Left ventricle myocardium inferior (tissue), 1 donor: ENCODE measurements at regions of chr4 and their contacts with region 1.

Region 1: DNA sequence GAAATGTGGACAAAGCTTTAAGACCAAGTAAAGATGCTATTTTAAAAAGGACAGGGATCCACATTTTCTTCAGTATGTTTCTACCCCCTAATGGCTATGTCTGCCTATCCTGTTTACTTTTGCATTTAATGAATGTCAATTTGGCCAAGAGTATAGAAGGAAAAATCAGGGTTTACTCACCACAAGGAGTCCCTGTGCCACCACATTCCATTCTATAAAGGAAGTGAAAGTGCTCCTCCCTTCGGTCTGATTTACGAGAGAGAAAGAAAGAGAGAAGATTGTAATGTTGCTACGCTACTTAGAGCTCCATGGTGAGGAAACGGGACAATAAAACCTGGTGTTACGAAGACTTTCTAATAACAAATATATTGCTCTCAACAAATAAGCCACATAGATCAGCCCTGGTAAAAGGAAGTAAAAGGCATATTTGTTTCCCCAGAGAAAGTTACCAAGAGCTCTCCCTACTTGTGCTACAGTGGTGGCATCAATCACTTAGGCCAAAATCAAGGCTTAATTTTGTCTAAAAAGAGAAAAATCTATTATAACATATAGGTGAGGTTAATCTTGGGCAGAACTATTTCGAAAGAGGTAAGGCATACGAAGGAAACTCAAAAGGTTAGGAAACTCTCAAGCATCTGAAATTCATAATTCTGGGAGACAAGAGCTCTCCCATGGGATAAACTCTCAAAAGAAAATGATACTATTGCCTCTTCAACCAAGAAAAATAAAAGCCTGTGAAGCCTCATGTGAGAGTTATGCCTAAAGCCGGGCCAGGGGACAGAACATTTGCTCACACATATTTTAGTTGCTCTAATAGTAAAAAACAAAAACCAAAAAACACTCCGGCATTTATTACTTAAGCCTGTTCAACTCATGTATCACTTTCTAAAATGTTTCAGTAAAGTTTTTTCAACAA is 29.5 kb downstream of the TAPT1 start:
- DNase-seq: no peak
- H3K4me3 ChIP-seq: peak overlapping the region; percentile 46
- H3K27ac ChIP-seq: peak overlapping the region; percentile 66
- H3K4me1 ChIP-seq: peaks cover 74% of the 10 kb centered on the region
- H3K27me3 ChIP-seq: no peaks in the 10 kb centered on the region
- CTCF ChIP-seq: peak; percentile 58

Region 2: DNA sequence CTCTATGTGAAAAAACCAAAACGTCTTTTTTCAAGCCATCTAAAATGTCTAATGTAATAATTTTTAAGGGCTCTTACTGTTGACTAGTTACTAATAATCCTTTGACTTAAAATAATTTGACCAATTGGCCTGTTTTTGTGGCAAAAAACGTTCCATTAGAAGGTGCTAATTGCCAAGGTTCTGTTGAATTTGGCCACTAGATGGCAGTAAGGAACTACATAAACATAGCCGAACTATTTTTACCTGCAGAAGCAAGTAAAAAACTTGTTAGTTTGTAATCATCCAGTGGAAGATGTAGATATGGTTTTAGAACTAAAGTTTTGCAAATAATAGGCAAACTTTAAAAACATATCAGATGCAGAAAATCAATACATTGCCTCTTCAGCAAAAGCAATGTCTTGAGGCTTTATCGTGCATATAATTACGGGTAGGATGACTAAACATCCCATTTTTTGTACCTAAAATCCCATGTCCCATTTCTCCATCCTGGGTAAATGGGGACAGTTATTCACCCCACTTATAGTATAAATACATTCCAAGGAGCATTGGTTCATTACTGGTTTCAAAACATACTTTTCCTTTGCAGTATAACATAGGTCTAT is 170.5 kb before region 1 on chr4:
- intact Hi-C with region 1: loop called (anchors 5 kb)
- DNase-seq: no peak
- H3K4me3 ChIP-seq: no peak overlapping the region
- H3K27ac ChIP-seq: no peak overlapping the region
- H3K4me1 ChIP-seq: peaks cover 55% of the 10 kb centered on the region
- H3K27me3 ChIP-seq: no peaks in the 10 kb centered on the region
- CTCF ChIP-seq: peak; percentile 89

Region 3: GRCh38 chr4:16377887-16378286 is 181.2 kb after region 1 on chr4:
- intact Hi-C with region 1: no loop called
- DNase-seq: no peak
- H3K4me3 ChIP-seq: no peak overlapping the region
- H3K27ac ChIP-seq: no peak overlapping the region
- H3K4me1 ChIP-seq: no peaks in the 10 kb centered on the region
- H3K27me3 ChIP-seq: no peaks in the 10 kb centered on the region
- CTCF ChIP-seq: no peak